OCI-LY7 (cell line): ENCODE measurements at regions of chr20 and their contacts with region 1.

Region 1: DNA sequence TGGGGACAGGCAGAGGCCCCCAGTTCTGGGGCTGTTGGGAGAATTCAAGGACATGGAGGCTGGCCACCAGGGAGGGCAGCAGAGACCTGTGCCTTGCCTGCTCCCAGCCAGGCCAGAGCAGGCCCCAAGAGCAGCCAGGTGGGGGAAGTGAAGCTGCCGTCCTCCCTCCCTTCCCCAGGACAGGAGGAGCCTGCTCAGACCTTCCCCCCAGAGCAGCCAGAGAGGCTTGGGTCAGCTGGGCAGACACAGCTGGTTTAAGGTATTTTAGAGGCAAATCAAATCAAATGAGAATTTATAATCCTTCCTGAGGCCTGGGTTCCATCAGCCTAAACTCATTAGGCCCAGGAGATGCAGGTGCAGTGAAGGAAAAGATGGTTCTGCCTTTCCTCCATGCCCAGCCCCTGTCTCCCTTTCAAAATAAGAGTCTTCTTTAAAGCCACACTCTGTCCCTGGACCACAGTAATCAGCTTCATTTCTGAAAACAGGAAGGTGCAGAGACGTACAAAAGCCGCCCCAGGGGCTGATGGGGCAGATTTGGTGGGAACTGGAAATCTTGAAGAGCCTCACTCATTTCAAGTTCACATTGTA is 21.7 kb downstream of the BMP7 start:
- DNase-seq: peak; percentile 94
- H3K4me3 ChIP-seq: peak overlapping the region; percentile 47
- H3K27ac ChIP-seq: peak overlapping the region; percentile 87
- H3K4me1 ChIP-seq: peaks cover 61% of the 10 kb centered on the region
- CTCF ChIP-seq: peak; percentile 63

Region 2: GRCh38 chr20:57317789-57318371 is 73.2 kb after region 1 on chr20:
- CTCF ChIA-PET with region 1: no interaction called
- POLR2A ChIA-PET with region 1: interaction called, 7 read pairs
- intact Hi-C with region 1: loop called (anchors 5 kb)
- DNase-seq: peak; percentile 91
- H3K4me3 ChIP-seq: peak overlapping the region; percentile 37
- H3K27ac ChIP-seq: peak overlapping the region; percentile 95
- H3K4me1 ChIP-seq: peaks cover 100% of the 10 kb centered on the region
- CTCF ChIP-seq: no peak

Region 3: DNA sequence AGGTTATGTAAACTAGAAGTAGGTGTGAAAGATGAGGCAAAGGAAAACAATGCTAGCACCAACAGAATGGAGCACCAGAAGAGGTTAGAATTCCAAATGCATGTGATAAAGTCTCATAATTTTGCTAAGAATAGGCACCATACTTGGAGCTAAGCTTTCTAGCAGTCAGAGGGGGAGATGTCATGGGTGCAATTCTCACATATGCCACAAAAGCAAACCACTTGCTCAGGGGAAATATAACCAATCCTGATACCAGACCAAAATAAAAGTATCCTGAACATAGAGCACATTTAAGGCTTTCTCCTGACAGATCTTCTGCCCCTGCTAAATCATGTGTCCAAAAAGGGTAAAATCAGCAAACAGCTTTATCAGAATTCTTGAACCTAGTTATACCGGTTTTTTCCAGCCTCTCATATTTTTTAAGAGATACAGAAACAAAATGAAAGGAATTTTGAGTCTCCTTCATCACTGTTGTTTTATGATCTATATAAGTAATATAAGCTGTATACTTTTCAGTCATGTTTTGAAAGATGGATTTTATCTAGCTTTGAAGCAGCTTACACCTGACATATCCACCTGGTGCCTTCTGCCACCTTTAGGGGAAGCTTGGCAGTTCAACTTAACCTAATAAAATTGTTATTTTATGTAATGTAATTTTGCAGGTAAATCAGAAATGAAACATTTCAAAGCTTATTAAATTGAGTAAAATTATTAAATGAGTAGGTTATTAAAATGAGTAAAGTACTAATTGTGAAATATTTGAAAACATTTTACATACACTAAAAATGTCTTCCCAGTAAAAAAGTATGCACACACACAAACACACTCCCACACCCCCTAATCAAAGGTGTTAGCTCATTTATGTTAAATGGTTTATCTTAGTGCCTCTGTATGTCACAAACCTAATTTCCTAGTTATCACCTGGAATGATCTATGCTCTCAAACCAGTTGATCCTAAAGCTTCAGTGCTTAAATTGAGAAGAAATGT is 87.7 kb after region 1 on chr20:
- CTCF ChIA-PET with region 1: interaction called, 10 read pairs
- POLR2A ChIA-PET with region 1: interaction called, 6 read pairs
- intact Hi-C with region 1: loop called (anchors 2 kb)
- DNase-seq: peak; percentile 65
- H3K4me3 ChIP-seq: no peak overlapping the region
- H3K27ac ChIP-seq: no peak overlapping the region
- H3K4me1 ChIP-seq: peaks cover 49% of the 10 kb centered on the region
- CTCF ChIP-seq: peak; percentile 98

Region 4: GRCh38 chr20:57498425-57499400 is 254.0 kb after region 1 on chr20:
- CTCF ChIA-PET with region 1: no interaction called
- POLR2A ChIA-PET with region 1: no interaction called
- intact Hi-C with region 1: no loop called
- DNase-seq: peak; percentile 70
- H3K4me3 ChIP-seq: no peak overlapping the region
- H3K27ac ChIP-seq: peak overlapping the region; percentile 14
- H3K4me1 ChIP-seq: peaks cover 41% of the 10 kb centered on the region
- CTCF ChIP-seq: peak; percentile 75